ENCODE measurements at regions of chr3 and their contacts with region 1.

Region 1: DNA sequence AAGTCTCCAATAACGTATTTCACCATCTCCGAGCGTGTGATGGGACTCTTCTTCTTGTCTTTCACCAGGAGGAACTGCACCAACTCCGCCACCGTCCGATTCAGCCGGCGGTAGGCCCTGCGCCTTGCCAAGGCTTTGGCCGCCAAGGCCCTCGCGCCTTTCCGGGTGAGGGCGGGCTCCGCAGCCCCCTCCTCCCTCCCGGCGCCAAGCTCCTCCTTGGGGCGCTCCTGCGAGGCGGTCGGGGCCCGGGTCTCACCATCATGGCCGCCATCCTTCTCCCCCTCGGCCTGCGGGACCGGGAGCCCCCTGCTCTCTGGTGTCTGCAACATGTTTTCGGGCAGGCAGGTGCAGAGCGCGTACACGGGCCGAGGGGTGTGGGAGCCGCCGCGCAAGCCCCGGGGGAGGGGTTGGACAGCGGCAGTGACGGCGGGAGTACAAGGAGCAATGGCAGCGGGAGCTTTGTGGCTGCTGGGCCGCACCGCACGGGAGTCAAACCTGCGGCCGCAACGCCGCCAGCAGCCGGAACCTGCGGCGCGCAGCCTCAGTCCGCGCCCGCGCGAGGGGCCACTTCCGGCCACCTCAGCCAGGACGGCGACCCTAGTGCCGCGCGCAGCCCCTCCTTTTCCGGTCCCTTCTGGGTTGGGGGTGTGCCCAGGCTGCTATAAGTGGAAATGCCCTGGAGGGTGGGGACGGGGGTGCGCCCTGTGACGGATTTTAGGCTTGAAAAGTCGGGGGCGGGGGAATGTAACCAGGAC is at the start of gene MAGEF1:
- DNase-seq: peak; percentile 83 to 86
- ATAC-seq: peak; percentile 81 to 92 (median 90)
- H3K4me3 ChIP-seq: peak within 1 kb of the TSS; percentile 89
- H3K27ac ChIP-seq: peak within 1 kb of the TSS; percentile 89
- H3K4me1 ChIP-seq: peaks cover 26% of the 10 kb centered on the region
- H3K27me3 ChIP-seq: no peaks in the 10 kb centered on the region
- CTCF ChIP-seq: no peak
- total RNA-seq, gene MAGEF1: 13.0 to 23.6 (median 15.9) TPM

Region 2: GRCh38 chr3:184688251-184688881 is 23.3 kb before region 1 on chr3:
- intact Hi-C with region 1: no loop called
- DNase-seq: no peak
- ATAC-seq: peak; percentile 56 to 79 (median 72)
- H3K4me3 ChIP-seq: no peak overlapping the region
- H3K27ac ChIP-seq: peak overlapping the region; percentile 56
- H3K4me1 ChIP-seq: peaks cover 20% of the 10 kb centered on the region
- H3K27me3 ChIP-seq: no peaks in the 10 kb centered on the region
- CTCF ChIP-seq: no peak

Region 3: GRCh38 chr3:184748219-184749135 is 36.8 kb after region 1 on chr3:
- intact Hi-C with region 1: loop called in 1 of 2 experiments (anchors 2 kb)
- DNase-seq: no peak
- ATAC-seq: no peak
- H3K4me3 ChIP-seq: no peak overlapping the region
- H3K27ac ChIP-seq: no peak overlapping the region
- H3K4me1 ChIP-seq: peaks cover 12% of the 10 kb centered on the region
- H3K27me3 ChIP-seq: no peaks in the 10 kb centered on the region
- CTCF ChIP-seq: no peak

Measured in psoas muscle (tissue), 8 donors.